ENCODE measurements at regions of chr18 and their contacts with region 1.

Region 1: DNA sequence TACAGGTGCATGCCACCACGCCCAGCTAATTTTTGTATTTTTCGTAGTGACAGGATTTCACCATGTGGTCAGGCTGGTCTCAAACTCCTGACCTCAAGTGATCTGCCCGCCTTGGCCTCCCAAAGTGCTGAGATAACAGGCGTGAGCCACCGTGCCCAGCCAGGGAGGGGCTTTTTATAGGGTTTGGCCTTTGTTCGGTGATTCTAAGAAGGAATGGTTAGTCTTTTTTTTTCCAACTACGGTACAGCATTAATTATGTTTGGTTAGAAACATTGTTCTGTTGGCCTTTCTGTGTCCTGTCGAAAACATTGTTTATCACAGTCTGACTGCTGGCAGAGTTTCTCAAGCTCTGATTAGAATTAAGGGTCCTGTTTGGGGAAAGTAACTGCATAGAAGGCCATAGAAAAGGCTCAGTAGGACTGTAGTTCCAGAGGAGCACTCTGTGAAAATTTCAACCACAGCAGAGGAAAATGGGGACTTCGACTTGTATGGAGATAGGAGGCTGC is 19.3 kb upstream of the SMCHD1 start:
- H3K4me3 Mint-ChIP-seq: peak overlapping the region; percentile 62
- H3K27ac Mint-ChIP-seq: peak overlapping the region; percentile 98
- H3K4me1 Mint-ChIP-seq: peaks cover 61% of the 10 kb centered on the region
- H3K27me3 Mint-ChIP-seq: no peaks in the 10 kb centered on the region

Region 2: DNA sequence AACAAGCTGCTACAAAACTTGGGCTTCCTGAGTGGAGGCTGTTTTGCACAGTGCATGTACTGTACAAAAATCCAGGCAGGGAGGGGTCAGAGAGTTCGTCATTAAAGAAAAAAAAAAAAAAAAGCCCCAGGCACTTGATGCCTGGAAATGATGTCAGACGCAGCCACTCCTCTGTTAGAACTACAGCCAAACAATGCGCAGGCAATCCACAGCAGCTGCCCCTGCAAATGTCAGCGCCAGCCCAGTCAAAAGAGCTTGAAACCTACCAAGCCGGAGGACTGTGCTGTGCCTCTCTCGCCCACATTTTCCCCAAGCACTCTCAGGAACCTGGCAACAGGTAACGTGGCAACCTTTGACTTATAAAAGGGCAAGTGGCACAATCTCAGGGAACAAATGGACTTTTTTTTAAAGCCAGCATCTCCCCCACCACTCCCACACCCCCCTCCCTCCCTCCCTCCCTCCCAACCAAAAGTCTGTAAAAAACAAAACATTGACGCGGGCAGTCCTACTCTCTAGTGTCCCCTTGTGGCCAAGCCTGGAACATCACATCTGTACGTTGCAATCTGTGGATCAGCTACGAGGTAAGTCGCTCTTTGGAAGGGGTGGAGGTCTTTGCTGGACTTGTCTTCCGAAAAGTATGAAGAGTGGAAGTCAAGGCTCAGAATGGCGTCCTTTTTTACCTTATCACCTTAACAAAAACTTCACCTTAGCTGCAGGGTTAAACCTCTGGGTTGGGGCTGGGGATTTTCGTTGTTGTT is 957.9 kb after region 1 on chr18:
- intact Hi-C with region 1: loop called (anchors 10 kb)
- H3K4me3 Mint-ChIP-seq: peak overlapping the region; percentile 75
- H3K27ac Mint-ChIP-seq: peak overlapping the region; percentile 99
- H3K4me1 Mint-ChIP-seq: peaks cover 44% of the 10 kb centered on the region
- H3K27me3 Mint-ChIP-seq: no peaks in the 10 kb centered on the region